ENCODE measurements at regions of chr15 and their contacts with region 1.

Region 1: DNA sequence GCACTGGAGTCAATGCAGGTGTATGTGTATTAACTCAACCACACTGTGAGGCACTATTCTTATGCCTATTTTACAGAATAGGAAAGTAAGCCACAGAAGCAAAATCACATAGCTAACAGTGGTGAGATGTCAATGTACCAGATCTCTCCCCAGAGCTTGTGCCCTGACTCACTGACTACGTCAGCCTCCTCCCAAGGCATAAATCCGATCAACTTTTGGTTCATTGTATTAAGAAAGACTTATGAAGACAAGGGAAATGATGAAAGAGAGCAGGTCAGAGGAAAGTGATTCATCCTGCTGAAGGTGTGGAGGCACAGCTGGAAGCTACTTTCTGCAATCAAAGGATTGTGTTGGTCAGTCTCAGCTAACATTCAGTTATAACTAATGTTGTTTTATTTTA is 33.0 kb upstream of the SV2B start:
- DNase-seq: no peak
- H3K4me3 ChIP-seq: no peak overlapping the region
- H3K27ac ChIP-seq: no peak overlapping the region
- H3K4me1 ChIP-seq: no peaks in the 10 kb centered on the region
- H3K27me3 ChIP-seq: peaks cover 0 to 13% of the 10 kb centered on the region in 2 donors
- CTCF ChIP-seq: no peak

Region 2: GRCh38 chr15:91032919-91033803 is 33.9 kb before region 1 on chr15:
- intact Hi-C with region 1: loop called (anchors 1 kb)
- DNase-seq: no peak
- H3K4me3 ChIP-seq: no peak overlapping the region
- H3K27ac ChIP-seq: no peak overlapping the region
- H3K4me1 ChIP-seq: no peaks in the 10 kb centered on the region
- H3K27me3 ChIP-seq: peaks cover 0 to 12% of the 10 kb centered on the region in 2 donors
- CTCF ChIP-seq: peak; percentile 34 to 49